ENCODE measurements at regions of chr19 and their contacts with region 1.

Region 1: GRCh38 chr19:47112997-47113849 is at the start of gene ZC3H4:
- DNase-seq: peak; percentile 98
- ATAC-seq: peak; percentile 93
- H3K4me3 ChIP-seq: peak within 1 kb of the TSS; percentile 87 to 94
- H3K27ac ChIP-seq: peak within 1 kb of the TSS; percentile 100
- H3K4me1 ChIP-seq: peaks cover 15 to 36% of the 10 kb centered on the region in 2 experiments
- H3K27me3 ChIP-seq: no peaks in the 10 kb centered on the region
- CTCF ChIP-seq: no peak
- POLR2A ChIP-seq: peak; percentile 70
- RAD21 ChIP-seq: no peak
- total RNA-seq, gene ZC3H4: 45.1 TPM

Region 2: GRCh38 chr19:47081111-47081510 is 32.1 kb before region 1 on chr19:
- CTCF ChIA-PET with region 1: interaction called, 9 read pairs
- POLR2A ChIA-PET with region 1: interaction called, 13 read pairs
- RAD21 ChIA-PET with region 1: interaction called in 1 of 2 experiments, 3 read pairs
- intact Hi-C with region 1: no loop called
- DNase-seq: no peak
- ATAC-seq: no peak
- H3K4me3 ChIP-seq: no peak overlapping the region
- H3K27ac ChIP-seq: no peak overlapping the region
- H3K4me1 ChIP-seq: peaks cover 0 to 18% of the 10 kb centered on the region in 2 experiments; a peak in 3 of 4 replicates
- H3K27me3 ChIP-seq: no peaks in the 10 kb centered on the region
- CTCF ChIP-seq: no peak
- POLR2A ChIP-seq: no peak
- RAD21 ChIP-seq: no peak

Region 3: GRCh38 chr19:47102346-47103060 is 10.7 kb before region 1 on chr19:
- CTCF ChIA-PET with region 1: interaction called, 3 read pairs
- POLR2A ChIA-PET with region 1: interaction called, 27 read pairs
- RAD21 ChIA-PET with region 1: no interaction called
- intact Hi-C with region 1: no loop called
- DNase-seq: no peak
- ATAC-seq: no peak
- H3K4me3 ChIP-seq: no peak overlapping the region
- H3K27ac ChIP-seq: no peak overlapping the region
- H3K4me1 ChIP-seq: peaks cover 23 to 34% of the 10 kb centered on the region in 2 experiments
- H3K27me3 ChIP-seq: no peaks in the 10 kb centered on the region
- CTCF ChIP-seq: no peak
- POLR2A ChIP-seq: no peak
- RAD21 ChIP-seq: no peak

Region 4: DNA sequence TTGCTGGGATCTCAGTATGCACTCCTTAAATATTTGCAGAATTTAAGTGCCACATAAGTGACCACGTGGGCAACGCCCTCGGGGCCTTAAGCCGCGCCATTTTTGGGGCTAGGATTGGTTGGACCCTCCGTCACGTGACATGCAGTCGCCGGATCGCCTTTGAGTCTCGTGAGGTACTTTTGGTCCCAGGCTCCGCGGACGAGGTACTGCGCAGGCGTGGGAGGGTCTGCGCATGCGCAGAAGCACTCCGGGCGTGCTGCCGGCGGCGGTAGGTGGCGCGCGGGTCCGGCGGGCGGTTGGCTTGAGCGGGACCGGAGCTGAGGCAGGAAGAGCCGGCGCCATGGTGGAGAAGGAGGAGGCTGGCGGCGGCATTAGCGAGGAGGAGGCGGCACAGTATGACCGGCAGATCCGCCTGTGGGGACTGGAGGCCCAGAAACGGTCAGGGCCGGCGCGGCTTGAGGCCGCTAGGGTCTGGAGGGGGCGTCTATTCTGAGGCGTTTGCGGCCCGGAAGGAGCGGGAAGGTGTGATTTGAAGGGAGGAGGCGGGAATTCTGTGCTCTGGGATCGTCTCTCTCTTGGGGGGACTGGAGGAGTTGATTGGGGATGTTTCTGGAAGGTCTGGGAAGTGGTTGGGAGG is 17.5 kb after region 1 on chr19 and contains the start of gene SAE1:
- CTCF ChIA-PET with region 1: interaction called, 7 read pairs
- POLR2A ChIA-PET with region 1: interaction called, 11 read pairs
- RAD21 ChIA-PET with region 1: no interaction called
- intact Hi-C with region 1: no loop called
- DNase-seq: peak; percentile 99
- ATAC-seq: peak; percentile 90
- H3K4me3 ChIP-seq: peak within 1 kb of the TSS; percentile 98 to 100
- H3K27ac ChIP-seq: peak within 1 kb of the TSS; percentile 86
- H3K4me1 ChIP-seq: peaks cover 31 to 46% of the 10 kb centered on the region in 2 experiments
- H3K27me3 ChIP-seq: no peaks in the 10 kb centered on the region
- CTCF ChIP-seq: peak; percentile 12 to 38 (median 36); a peak in 3 of 6 replicates
- POLR2A ChIP-seq: no peak
- RAD21 ChIP-seq: peak; percentile 54
- total RNA-seq, gene SAE1: 213 TPM

Region 5: DNA sequence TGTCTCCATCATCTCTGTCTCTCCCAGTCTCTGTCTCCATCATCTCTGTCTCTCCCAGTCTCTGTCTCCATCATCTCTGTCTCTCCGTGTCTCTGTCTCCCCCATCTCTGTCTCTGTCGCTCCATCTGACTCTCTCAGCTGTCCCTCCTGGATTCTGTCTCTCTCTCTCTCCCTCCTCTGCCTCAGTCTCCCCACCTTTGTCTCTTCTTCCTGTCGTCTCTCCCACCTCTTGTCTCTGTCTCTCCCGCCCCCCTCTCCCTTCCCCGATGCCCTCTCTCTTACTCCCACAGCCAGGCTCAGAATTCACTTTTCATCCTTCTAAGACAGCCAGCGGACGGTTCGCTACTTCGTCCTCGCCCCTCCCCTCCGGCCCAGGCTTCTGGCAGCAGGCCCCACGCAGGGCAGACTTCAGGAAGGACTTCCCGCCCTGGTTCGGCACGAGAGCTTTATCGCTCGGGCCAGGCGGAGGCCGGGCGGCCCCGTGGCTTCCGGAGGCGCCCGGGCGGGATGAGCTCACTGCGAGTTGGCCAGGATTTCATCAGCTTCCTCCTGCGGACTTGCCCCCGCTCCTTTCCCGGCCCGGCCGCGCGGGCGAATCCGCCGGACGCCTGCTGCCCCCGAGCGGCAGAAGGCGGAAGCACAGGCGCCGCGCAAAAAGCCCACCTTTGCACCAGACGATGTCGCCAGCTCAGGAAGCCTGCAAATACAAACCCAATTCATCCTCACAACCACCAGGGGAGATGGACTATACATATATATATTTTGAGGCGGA is 130.7 kb after region 1 on chr19:
- CTCF ChIA-PET with region 1: interaction called, 6 read pairs
- POLR2A ChIA-PET with region 1: interaction called, 10 read pairs
- RAD21 ChIA-PET with region 1: interaction called, 3 read pairs
- intact Hi-C with region 1: no loop called
- DNase-seq: peak; percentile 85
- ATAC-seq: peak; percentile 80
- H3K4me3 ChIP-seq: peak overlapping the region; percentile 52 to 56
- H3K27ac ChIP-seq: peak overlapping the region; percentile 90
- H3K4me1 ChIP-seq: peaks cover 32 to 50% of the 10 kb centered on the region in 2 experiments
- H3K27me3 ChIP-seq: no peaks in the 10 kb centered on the region
- CTCF ChIP-seq: peak; percentile 87 to 97 (median 97)
- POLR2A ChIP-seq: no peak
- RAD21 ChIP-seq: peak; percentile 99

Measured in HCT116 (cell line).